ENCODE measurements at regions of chr15 and their contacts with region 1.

Region 1: GRCh38 chr15:70535955-70536338 is 227.4 kb downstream of the UACA start:
- DNase-seq: no peak
- H3K4me3 Mint-ChIP-seq: peak overlapping the region; percentile 55
- H3K27ac Mint-ChIP-seq: no peak overlapping the region
- H3K4me1 Mint-ChIP-seq: peaks cover 33% of the 10 kb centered on the region
- H3K27me3 Mint-ChIP-seq: peaks cover 20% of the 10 kb centered on the region

Region 2: GRCh38 chr15:70569091-70569621 is 33.2 kb after region 1 on chr15:
- intact Hi-C with region 1: loop called (anchors 1 kb)
- DNase-seq: no peak
- H3K4me3 Mint-ChIP-seq: no peak overlapping the region
- H3K27ac Mint-ChIP-seq: no peak overlapping the region
- H3K4me1 Mint-ChIP-seq: peaks cover 6% of the 10 kb centered on the region
- H3K27me3 Mint-ChIP-seq: peaks cover 4% of the 10 kb centered on the region

Region 3: GRCh38 chr15:70605606-70606410 is 69.9 kb after region 1 on chr15:
- intact Hi-C with region 1: no loop called
- DNase-seq: no peak
- H3K4me3 Mint-ChIP-seq: no peak overlapping the region
- H3K27ac Mint-ChIP-seq: no peak overlapping the region
- H3K4me1 Mint-ChIP-seq: no peaks in the 10 kb centered on the region
- H3K27me3 Mint-ChIP-seq: peaks cover 4% of the 10 kb centered on the region

Measured in activated T-helper 1 cell treated with anti-CD3 and anti-CD28 coated beads, Interleukin-12 subunit alpha, Interleukin-12 subunit beta, Interleukin-2, Interleukin-4 antibody, amounts not matched to agents 30 ng/mL and 10 ng/mL and 1 ng/mL, durations not matched to agents 14 hours and 24 hours and 36 hours (primary cell).